MCF 10A (cell line): ENCODE measurements at regions of chr14 and their contacts with region 1.

Region 1: DNA sequence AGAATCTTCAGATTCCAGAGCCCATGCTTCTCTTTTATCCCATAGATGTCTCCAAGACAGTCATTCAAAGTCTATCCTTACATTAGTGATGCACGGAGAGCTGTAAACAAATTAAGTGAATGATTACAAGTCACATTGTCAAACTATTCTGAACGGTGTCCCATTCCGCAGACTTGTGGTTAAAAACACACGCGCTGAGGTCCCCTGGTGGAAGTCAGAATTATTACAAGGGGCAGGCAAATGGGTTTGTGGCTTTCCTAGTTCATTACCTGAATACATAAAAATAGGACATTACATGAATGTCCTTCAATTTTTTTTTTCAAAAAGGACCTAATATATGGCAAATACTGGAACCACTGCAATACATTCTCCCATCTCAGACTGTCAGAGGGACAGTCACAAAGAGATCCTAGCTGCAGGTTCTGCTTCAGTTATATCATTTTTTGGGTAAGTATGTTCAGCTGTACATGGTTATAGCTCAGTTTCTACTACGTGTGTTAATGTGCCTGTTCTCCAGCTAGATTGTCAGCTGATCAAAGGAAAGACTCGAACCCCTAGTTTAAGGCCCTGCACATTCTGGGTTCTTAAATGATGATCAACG is 53.1 kb upstream of the STON2 start:
- DNase-seq: peak; percentile 68
- H3K4me3 Mint-ChIP-seq: no peak overlapping the region
- H3K27ac Mint-ChIP-seq: no peak overlapping the region
- H3K4me1 Mint-ChIP-seq: peaks cover 8% of the 10 kb centered on the region
- H3K27me3 Mint-ChIP-seq: no peaks in the 10 kb centered on the region
- CTCF ChIP-seq: peak; percentile 86

Region 2: DNA sequence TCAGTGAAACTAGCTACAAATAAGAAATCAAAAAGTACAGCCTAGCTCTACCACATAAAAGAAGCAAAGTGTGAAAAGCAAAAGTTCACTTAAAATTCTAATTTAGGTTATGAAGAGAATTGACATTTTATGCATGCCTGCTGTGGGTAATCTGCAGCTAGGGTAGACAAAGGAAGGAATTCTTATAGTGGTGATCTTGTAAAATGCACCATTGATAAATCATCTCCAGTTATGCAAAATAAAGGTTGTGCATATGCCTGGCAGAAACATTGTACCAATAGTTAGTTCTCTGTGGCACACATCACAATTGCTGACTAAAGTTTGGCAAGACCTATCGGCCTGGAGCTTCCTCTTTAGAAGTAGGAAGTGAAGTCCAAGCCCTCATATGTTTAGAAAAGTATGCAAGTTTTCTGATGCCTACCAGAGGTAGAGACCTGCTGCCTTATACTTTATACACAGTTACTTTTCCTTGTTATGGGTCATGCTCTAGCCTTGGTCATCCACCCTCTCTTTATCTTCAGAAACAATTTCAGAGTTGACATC is 419.5 kb before region 1 on chr14:
- CTCF ChIA-PET with region 1: no interaction called
- POLR2A ChIA-PET with region 1: no interaction called
- intact Hi-C with region 1: no loop called
- DNase-seq: no peak
- H3K4me3 Mint-ChIP-seq: no peak overlapping the region
- H3K27ac Mint-ChIP-seq: no peak overlapping the region
- H3K4me1 Mint-ChIP-seq: no peaks in the 10 kb centered on the region
- H3K27me3 Mint-ChIP-seq: peaks cover 15% of the 10 kb centered on the region
- CTCF ChIP-seq: no peak

Region 3: GRCh38 chr14:81246461-81247145 is 206.7 kb before region 1 on chr14:
- CTCF ChIA-PET with region 1: interaction called, 17 read pairs
- POLR2A ChIA-PET with region 1: interaction called, 3 read pairs
- intact Hi-C with region 1: no loop called
- DNase-seq: peak; percentile 16
- H3K4me3 Mint-ChIP-seq: no peak overlapping the region
- H3K27ac Mint-ChIP-seq: no peak overlapping the region
- H3K4me1 Mint-ChIP-seq: no peaks in the 10 kb centered on the region
- H3K27me3 Mint-ChIP-seq: no peaks in the 10 kb centered on the region
- CTCF ChIP-seq: no peak

Region 4: GRCh38 chr14:81269100-81269978 is 183.9 kb before region 1 on chr14:
- CTCF ChIA-PET with region 1: interaction called, 432 read pairs
- POLR2A ChIA-PET with region 1: interaction called, 33 read pairs
- intact Hi-C with region 1: loop called (anchors 1 kb)
- DNase-seq: peak; percentile 76
- H3K4me3 Mint-ChIP-seq: no peak overlapping the region
- H3K27ac Mint-ChIP-seq: peak overlapping the region; percentile 16
- H3K4me1 Mint-ChIP-seq: peaks cover 20% of the 10 kb centered on the region
- H3K27me3 Mint-ChIP-seq: no peaks in the 10 kb centered on the region
- CTCF ChIP-seq: peak; percentile 76

Region 5: DNA sequence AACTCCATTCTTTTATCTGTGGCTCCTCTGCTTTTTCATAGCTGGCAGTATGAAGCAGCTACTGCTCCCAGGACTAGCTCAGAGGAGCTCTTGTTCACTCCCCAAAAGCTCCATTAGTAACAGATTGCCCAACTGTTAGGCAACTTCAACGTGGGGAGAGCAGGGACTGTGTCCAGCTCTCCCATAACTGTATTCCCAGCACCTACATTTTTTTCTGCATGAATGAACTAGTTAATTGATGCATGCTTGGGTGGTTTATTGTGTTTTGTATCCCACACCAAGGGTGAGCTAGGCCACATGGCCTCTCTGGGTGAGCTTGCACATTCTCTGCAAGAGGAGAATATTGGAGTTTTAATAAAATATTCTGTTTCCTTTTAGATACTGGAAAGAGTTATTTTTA is 68.4 kb before region 1 on chr14:
- CTCF ChIA-PET with region 1: interaction called, 10 read pairs
- POLR2A ChIA-PET with region 1: interaction called, 3 read pairs
- intact Hi-C with region 1: no loop called
- DNase-seq: peak; percentile 66
- H3K4me3 Mint-ChIP-seq: no peak overlapping the region
- H3K27ac Mint-ChIP-seq: no peak overlapping the region
- H3K4me1 Mint-ChIP-seq: peaks cover 13% of the 10 kb centered on the region
- H3K27me3 Mint-ChIP-seq: no peaks in the 10 kb centered on the region
- CTCF ChIP-seq: no peak

Region 6: GRCh38 chr14:81441626-81442134 is 11.6 kb before region 1 on chr14:
- CTCF ChIA-PET with region 1: interaction called, 36 read pairs
- POLR2A ChIA-PET with region 1: interaction called, 5 read pairs
- intact Hi-C with region 1: no loop called
- DNase-seq: no peak
- H3K4me3 Mint-ChIP-seq: no peak overlapping the region
- H3K27ac Mint-ChIP-seq: no peak overlapping the region
- H3K4me1 Mint-ChIP-seq: no peaks in the 10 kb centered on the region
- H3K27me3 Mint-ChIP-seq: peaks cover 29% of the 10 kb centered on the region
- CTCF ChIP-seq: no peak